Activated B cell treated with CpG ODN at 0.5 μM for 24 hours (primary cell): ENCODE measurements at regions of chr4 and their contacts with region 1.

Region 1: GRCh38 chr4:89024051-89024675 is 32.8 kb downstream of the FAM13A start:
- DNase-seq: no peak
- ATAC-seq: peak; percentile 89
- H3K4me3 Mint-ChIP-seq: no peak overlapping the region
- H3K27ac Mint-ChIP-seq: no peak overlapping the region
- H3K4me1 Mint-ChIP-seq: no peaks in the 10 kb centered on the region
- H3K27me3 Mint-ChIP-seq: no peaks in the 10 kb centered on the region
- CTCF ChIP-seq: no peak

Region 2: GRCh38 chr4:88033309-88033708 is 990.9 kb before region 1 on chr4:
- CTCF ChIA-PET with region 1: interaction called, 3 read pairs
- POLR2A ChIA-PET with region 1: no interaction called
- intact Hi-C with region 1: loop called (anchors 2 kb)
- DNase-seq: no peak
- ATAC-seq: no peak
- H3K4me3 Mint-ChIP-seq: no peak overlapping the region
- H3K27ac Mint-ChIP-seq: no peak overlapping the region
- H3K4me1 Mint-ChIP-seq: no peaks in the 10 kb centered on the region
- H3K27me3 Mint-ChIP-seq: no peaks in the 10 kb centered on the region
- CTCF ChIP-seq: no peak

Region 3: GRCh38 chr4:88523325-88524129 is 500.6 kb before region 1 on chr4 and contains the start of gene PYURF:
- CTCF ChIA-PET with region 1: interaction called, 7 read pairs
- POLR2A ChIA-PET with region 1: no interaction called
- intact Hi-C with region 1: loop called (anchors 1 kb)
- DNase-seq: peak; percentile 72
- ATAC-seq: peak; percentile 84
- H3K4me3 Mint-ChIP-seq: peak within 1 kb of the TSS; percentile 95
- H3K27ac Mint-ChIP-seq: peak within 1 kb of the TSS; percentile 85
- H3K4me1 Mint-ChIP-seq: peaks cover 18% of the 10 kb centered on the region
- H3K27me3 Mint-ChIP-seq: no peaks in the 10 kb centered on the region
- CTCF ChIP-seq: no peak
- total RNA-seq, gene PYURF: 42.2 and 48.3 TPM in 2 replicates

Region 4: DNA sequence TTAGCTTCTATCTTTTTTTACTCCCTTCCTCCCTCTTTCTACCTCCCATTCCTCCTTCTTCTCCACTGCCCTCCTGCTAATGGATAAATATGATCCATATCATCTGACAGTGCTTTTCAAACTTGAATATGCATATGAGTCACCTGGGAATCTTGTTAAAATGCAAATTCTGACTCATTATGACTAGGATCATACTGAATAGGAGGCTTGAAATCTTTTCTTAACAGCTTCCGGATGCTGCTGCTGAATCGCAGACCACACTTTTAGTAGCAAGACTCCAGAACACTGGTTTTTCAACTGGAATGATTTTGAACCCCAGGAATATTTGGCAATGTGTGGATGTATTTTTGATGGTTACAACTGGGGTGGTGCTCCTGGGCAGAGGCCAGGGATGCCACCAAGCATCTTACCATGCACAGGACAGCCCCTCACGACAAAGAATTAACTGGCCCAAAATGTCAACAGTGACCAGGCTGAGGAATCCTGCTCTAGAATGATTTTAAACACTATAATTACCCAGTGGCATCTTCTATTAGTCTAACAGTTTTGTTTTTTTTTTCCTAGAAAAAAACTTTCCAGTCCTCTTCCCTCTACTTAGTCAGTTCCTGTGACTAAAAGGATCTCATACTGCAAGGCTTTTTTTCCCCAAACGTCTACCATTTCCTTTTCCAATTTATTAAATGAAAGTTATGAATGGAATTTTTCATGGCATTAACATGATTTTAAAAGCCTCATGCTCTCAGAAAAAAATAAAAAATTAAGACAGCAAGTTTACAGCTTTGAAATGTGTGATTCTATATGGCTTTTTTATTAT is 490.0 kb before region 1 on chr4:
- CTCF ChIA-PET with region 1: interaction called, 39 read pairs
- POLR2A ChIA-PET with region 1: no interaction called
- intact Hi-C with region 1: loop called (anchors 1 kb)
- DNase-seq: no peak
- ATAC-seq: no peak
- H3K4me3 Mint-ChIP-seq: no peak overlapping the region
- H3K27ac Mint-ChIP-seq: no peak overlapping the region
- H3K4me1 Mint-ChIP-seq: no peaks in the 10 kb centered on the region
- H3K27me3 Mint-ChIP-seq: no peaks in the 10 kb centered on the region
- CTCF ChIP-seq: no peak

Region 5: DNA sequence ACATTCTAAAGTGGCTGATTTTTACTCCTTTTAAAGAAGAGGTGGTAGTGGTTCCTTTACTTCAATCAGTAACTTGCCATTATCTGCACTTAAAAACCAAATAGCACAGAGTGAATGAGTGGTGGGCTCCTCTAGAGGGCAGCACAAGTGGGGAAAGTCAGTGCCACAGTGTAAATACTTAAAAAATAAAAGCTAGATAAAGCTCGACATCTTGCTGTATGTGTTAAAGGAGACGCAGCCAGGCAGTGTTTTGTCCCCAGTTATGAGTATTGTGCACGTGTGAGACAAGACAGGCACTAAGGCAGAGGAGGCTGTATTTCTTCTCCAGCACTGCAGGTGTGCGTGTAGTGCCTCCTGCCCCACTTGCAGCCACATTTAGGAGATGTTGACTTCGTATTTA is 351.2 kb before region 1 on chr4:
- CTCF ChIA-PET with region 1: interaction called, 4 read pairs
- POLR2A ChIA-PET with region 1: no interaction called
- intact Hi-C with region 1: loop called (anchors 2 kb)
- DNase-seq: no peak
- ATAC-seq: peak; percentile 62
- H3K4me3 Mint-ChIP-seq: no peak overlapping the region
- H3K27ac Mint-ChIP-seq: no peak overlapping the region
- H3K4me1 Mint-ChIP-seq: no peaks in the 10 kb centered on the region
- H3K27me3 Mint-ChIP-seq: no peaks in the 10 kb centered on the region
- CTCF ChIP-seq: no peak

Region 6: DNA sequence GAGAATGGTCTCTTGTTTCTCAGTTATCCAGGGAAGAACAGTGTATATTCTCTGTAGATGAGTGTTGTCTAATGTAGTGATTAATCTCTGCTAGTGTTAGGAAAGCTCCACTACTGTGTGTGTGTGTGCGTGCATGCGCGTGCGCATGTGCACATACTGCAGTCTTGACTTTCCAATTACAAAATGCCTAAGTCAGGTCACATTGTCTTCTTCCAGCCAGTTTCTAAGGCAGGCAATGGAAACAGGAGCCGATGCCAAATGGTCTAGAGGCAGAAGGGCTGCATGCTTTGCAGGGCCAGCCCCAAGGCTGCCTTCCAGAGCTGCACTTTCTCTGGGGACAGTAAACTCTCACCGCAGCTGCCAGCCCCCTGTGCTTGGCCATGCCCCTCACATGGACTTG is 296.0 kb before region 1 on chr4:
- CTCF ChIA-PET with region 1: no interaction called
- POLR2A ChIA-PET with region 1: no interaction called
- intact Hi-C with region 1: no loop called
- DNase-seq: no peak
- ATAC-seq: no peak
- H3K4me3 Mint-ChIP-seq: no peak overlapping the region
- H3K27ac Mint-ChIP-seq: no peak overlapping the region
- H3K4me1 Mint-ChIP-seq: no peaks in the 10 kb centered on the region
- H3K27me3 Mint-ChIP-seq: no peaks in the 10 kb centered on the region
- CTCF ChIP-seq: no peak

Region 7: DNA sequence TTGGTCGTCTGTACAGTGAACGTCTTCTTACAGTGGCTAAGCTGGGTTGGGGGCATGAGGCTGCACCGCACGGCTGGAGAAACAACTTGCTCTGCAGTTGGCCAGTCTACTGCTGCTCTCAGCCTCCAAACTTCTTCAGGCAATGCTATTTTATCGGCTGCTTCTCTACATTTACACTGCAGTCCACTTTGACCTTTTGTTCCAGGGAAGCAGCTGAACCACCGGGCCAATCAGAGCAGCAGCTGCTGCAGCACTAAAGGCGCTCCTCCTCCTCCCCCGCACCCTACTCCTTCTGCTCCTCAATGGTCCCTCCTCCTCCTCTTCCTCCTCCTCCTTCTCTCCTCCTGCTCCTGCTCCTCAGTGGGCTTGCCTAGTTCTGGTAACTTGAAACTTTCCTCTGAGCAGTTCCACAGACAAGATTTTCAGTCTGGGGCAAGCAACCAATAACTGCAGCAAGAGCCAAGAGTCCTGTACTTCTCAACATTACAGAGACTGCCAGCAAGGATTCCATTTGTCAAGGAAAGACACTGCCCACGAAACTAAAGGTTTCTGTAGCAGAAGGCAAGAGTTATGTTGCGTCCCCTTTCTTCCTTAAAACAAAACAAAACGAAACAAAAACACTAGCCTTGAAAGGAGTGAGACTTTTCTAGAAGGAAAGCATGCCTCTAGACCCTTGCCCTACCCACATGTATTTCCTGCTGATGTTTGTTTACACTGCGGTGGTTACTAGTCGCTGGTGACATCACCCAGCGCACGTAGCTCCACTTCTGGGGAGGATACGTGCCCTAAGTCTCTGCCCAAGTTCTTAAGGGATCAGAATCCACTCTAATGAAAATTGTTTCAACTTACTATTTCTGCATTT is 200.9 kb before region 1 on chr4:
- CTCF ChIA-PET with region 1: interaction called, 82 read pairs
- POLR2A ChIA-PET with region 1: no interaction called
- intact Hi-C with region 1: loop called (anchors 1 kb)
- DNase-seq: no peak
- ATAC-seq: peak; percentile 82
- H3K4me3 Mint-ChIP-seq: peak overlapping the region; percentile 83
- H3K27ac Mint-ChIP-seq: peak overlapping the region; percentile 50
- H3K4me1 Mint-ChIP-seq: peaks cover 14% of the 10 kb centered on the region
- H3K27me3 Mint-ChIP-seq: no peaks in the 10 kb centered on the region
- CTCF ChIP-seq: no peak